ENCODE measurements at regions of chr6 and their contacts with region 1.

Region 1: GRCh38 chr6:24494821-24495795 is at the start of gene ALDH5A1:
- DNase-seq: peak; percentile 84
- ATAC-seq: peak; percentile 86
- H3K4me3 ChIP-seq: peak within 1 kb of the TSS; percentile 78 to 92 (median 82)
- H3K27ac ChIP-seq: peak within 1 kb of the TSS; percentile 86
- H3K4me1 ChIP-seq: peaks cover 36% of the 10 kb centered on the region
- H3K27me3 ChIP-seq: no peaks in the 10 kb centered on the region
- CTCF ChIP-seq: peak; percentile 83
- EP300 ChIP-seq: no peak
- POLR2A ChIP-seq: peak; percentile 80 to 87
- RAD21 ChIP-seq: peak; percentile 79
- total RNA-seq, gene ALDH5A1: 27.6 and 32.5 TPM in 2 replicates

Region 2: GRCh38 chr6:24431045-24431451 is 64.1 kb before region 1 on chr6:
- CTCF ChIA-PET with region 1: no interaction called
- POLR2A ChIA-PET with region 1: interaction called, 3 read pairs
- in situ Hi-C with region 1: no loop called
- intact Hi-C with region 1: loop called (anchors 2 kb)
- DNase-seq: peak; percentile 65
- ATAC-seq: peak; percentile 82
- H3K4me3 ChIP-seq: no peak overlapping the region
- H3K27ac ChIP-seq: no peak overlapping the region
- H3K4me1 ChIP-seq: no peaks in the 10 kb centered on the region
- H3K27me3 ChIP-seq: no peaks in the 10 kb centered on the region
- CTCF ChIP-seq: peak; percentile 76
- EP300 ChIP-seq: no peak
- POLR2A ChIP-seq: no peak
- RAD21 ChIP-seq: peak; percentile 56; the same call in 1 of the 2 replicates

Region 3: DNA sequence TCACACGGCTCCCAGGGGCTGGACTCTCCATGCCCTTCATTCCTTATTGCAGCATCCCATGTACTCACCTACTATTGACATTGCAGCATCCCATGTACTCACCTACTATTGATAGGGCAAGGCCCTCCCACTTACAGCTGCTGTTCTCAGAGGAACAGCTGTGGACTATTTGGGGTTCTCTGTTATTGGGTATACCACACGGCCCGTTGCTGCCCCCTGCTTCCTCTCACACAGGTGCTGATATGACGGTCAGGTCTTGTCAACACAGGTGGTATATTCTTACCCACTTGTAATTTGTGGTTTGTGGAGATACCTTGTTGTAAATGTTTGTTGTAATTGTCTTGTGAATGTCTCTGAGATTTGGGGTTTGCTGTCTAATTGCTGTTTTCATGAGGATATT is 18.5 kb after region 1 on chr6:
- CTCF ChIA-PET with region 1: no interaction called
- POLR2A ChIA-PET with region 1: interaction called, 10 read pairs
- in situ Hi-C with region 1: no loop called
- intact Hi-C with region 1: no loop called
- DNase-seq: no peak
- ATAC-seq: no peak
- H3K4me3 ChIP-seq: no peak overlapping the region
- H3K27ac ChIP-seq: no peak overlapping the region
- H3K4me1 ChIP-seq: peaks cover 8% of the 10 kb centered on the region; the same call in 1 of the 2 replicates
- H3K27me3 ChIP-seq: no peaks in the 10 kb centered on the region
- CTCF ChIP-seq: no peak
- EP300 ChIP-seq: no peak
- POLR2A ChIP-seq: no peak
- RAD21 ChIP-seq: no peak

Region 4: DNA sequence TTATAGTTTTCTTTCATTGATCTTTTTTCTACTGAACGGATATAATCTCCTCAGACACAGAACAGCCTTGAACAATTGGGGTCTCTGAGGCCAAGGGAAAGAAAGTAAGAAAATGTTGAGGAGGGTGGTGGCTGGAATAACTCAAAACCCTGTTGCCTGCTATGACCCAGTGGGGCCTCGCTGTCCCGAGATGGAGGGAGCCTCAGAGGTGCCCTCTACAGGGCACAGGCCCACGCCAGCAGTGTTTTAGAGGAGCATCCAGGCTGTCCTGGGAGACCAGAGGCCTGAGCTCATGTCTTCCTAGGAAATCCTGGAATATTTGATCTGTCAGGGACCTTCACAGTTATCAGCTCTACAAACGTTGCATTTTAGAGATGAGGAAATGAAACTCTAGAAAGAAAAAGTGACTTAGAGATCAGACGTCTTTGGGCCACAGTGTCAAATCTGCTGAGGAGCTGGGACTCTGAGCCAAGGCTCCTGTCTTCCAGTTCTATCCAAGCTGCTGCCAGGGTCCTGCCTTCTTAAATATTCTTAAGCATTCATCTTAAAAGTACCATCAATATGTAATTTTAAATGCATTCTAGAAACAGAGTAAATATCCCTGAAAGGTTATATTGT is 25.9 kb after region 1 on chr6:
- CTCF ChIA-PET with region 1: interaction called, 31 read pairs
- POLR2A ChIA-PET with region 1: interaction called, 19 read pairs
- in situ Hi-C with region 1: no loop called
- intact Hi-C with region 1: loop called (anchors 1 kb)
- DNase-seq: peak; percentile 62
- ATAC-seq: peak; percentile 100
- H3K4me3 ChIP-seq: no peak overlapping the region
- H3K27ac ChIP-seq: no peak overlapping the region
- H3K4me1 ChIP-seq: no peaks in the 10 kb centered on the region; the same call in 1 of the 2 replicates
- H3K27me3 ChIP-seq: no peaks in the 10 kb centered on the region
- CTCF ChIP-seq: peak; percentile 93
- EP300 ChIP-seq: no peak
- POLR2A ChIP-seq: no peak
- RAD21 ChIP-seq: peak; percentile 87

Region 5: GRCh38 chr6:24547243-24547642 is 52.1 kb after region 1 on chr6:
- CTCF ChIA-PET with region 1: no interaction called
- POLR2A ChIA-PET with region 1: no interaction called
- in situ Hi-C with region 1: no loop called
- intact Hi-C with region 1: no loop called
- DNase-seq: peak; percentile 32
- ATAC-seq: peak; percentile 81
- H3K4me3 ChIP-seq: no peak overlapping the region
- H3K27ac ChIP-seq: no peak overlapping the region
- H3K4me1 ChIP-seq: peaks cover 31% of the 10 kb centered on the region
- H3K27me3 ChIP-seq: peaks cover 0 to 3% of the 10 kb centered on the region in 2 experiments; a peak in 2 of 5 replicates
- CTCF ChIP-seq: peak; percentile 72
- EP300 ChIP-seq: no peak
- POLR2A ChIP-seq: no peak
- RAD21 ChIP-seq: peak; percentile 64

Region 6: GRCh38 chr6:24689964-24690363 is 194.9 kb after region 1 on chr6:
- CTCF ChIA-PET with region 1: no interaction called
- POLR2A ChIA-PET with region 1: no interaction called
- in situ Hi-C with region 1: no loop called
- intact Hi-C with region 1: loop called (anchors 10 kb)
- DNase-seq: no peak
- ATAC-seq: no peak
- H3K4me3 ChIP-seq: no peak overlapping the region
- H3K27ac ChIP-seq: no peak overlapping the region
- H3K4me1 ChIP-seq: peaks cover 5% of the 10 kb centered on the region; the same call in 1 of the 2 replicates
- H3K27me3 ChIP-seq: no peaks in the 10 kb centered on the region
- CTCF ChIP-seq: no peak
- EP300 ChIP-seq: no peak
- POLR2A ChIP-seq: no peak
- RAD21 ChIP-seq: no peak

Region 7: GRCh38 chr6:24960991-24961475 is 465.9 kb after region 1 on chr6:
- CTCF ChIA-PET with region 1: no interaction called
- POLR2A ChIA-PET with region 1: no interaction called
- in situ Hi-C with region 1: no loop called
- intact Hi-C with region 1: no loop called
- DNase-seq: no peak
- ATAC-seq: no peak
- H3K4me3 ChIP-seq: no peak overlapping the region
- H3K27ac ChIP-seq: no peak overlapping the region
- H3K4me1 ChIP-seq: no peaks in the 10 kb centered on the region
- H3K27me3 ChIP-seq: peaks cover 0 to 18% of the 10 kb centered on the region in 2 experiments; a peak in 3 of 5 replicates
- CTCF ChIP-seq: no peak
- EP300 ChIP-seq: no peak
- POLR2A ChIP-seq: no peak
- RAD21 ChIP-seq: no peak